ENCODE measurements at regions of chr21 and their contacts with region 1.

Region 1: DNA sequence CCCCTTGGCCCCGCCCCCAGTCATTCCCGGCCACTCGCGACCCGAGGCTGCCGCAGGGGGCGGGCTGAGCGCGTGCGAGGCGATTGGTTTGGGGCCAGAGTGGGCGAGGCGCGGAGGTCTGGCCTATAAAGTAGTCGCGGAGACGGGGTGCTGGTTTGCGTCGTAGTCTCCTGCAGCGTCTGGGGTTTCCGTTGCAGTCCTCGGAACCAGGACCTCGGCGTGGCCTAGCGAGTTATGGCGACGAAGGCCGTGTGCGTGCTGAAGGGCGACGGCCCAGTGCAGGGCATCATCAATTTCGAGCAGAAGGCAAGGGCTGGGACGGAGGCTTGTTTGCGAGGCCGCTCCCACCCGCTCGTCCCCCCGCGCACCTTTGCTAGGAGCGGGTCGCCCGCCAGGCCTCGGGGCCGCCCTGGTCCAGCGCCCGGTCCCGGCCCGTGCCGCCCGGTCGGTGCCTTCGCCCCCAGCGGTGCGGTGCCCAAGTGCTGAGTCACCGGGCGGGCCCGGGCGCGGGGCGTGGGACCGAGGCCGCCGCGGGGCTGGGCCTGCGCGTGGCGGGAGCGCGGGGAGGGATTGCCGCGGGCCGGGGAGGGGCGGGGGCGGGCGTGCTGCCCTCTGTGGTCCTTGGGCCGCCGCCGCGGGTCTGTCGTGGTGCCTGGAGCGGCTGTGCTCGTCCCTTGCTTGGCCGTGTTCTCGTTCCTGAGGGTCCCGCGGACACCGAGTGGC is at the start of gene SOD1:
- DNase-seq: peak; percentile 93
- ATAC-seq: peak; percentile 97
- H3K4me3 Mint-ChIP-seq: peak within 1 kb of the TSS; percentile 99
- H3K27ac Mint-ChIP-seq: peak within 1 kb of the TSS; percentile 96
- H3K4me1 Mint-ChIP-seq: peaks cover 65% of the 10 kb centered on the region
- H3K27me3 Mint-ChIP-seq: no peaks in the 10 kb centered on the region
- CTCF ChIP-seq: no peak
- total RNA-seq, gene SOD1: 107 and 131 TPM in 2 replicates

Region 2: DNA sequence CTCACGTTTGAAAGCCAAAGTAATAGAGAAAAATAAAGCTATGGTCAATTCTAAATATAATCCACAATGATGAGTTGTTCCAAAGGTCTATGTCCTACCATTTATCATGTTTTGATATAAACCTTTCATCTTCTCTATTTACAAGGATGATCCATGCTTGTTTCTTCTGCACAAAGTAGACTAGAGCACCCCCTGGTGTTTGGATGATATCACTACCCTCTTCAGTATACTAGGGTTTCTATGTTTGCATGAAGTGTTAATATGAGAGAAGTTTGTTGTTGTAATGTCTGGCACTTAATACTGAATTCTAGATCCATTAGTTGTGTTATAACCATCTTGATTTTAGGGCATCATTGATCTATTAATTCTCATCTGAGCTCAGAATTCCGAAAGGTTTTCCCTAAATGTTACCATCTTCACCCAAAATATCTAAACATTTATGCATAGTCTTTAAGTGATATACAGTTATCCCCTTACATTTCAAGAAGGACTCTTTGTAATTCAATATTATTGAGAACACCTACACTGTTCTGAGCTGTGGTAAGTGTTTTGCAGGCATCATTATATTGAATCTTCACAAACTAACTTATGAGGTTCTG is 1464.9 kb before region 1 on chr21:
- CTCF ChIA-PET with region 1: no interaction called
- POLR2A ChIA-PET with region 1: no interaction called
- intact Hi-C with region 1: no loop called
- DNase-seq: no peak
- ATAC-seq: no peak
- H3K4me3 Mint-ChIP-seq: no peak overlapping the region
- H3K27ac Mint-ChIP-seq: no peak overlapping the region
- H3K4me1 Mint-ChIP-seq: no peaks in the 10 kb centered on the region
- H3K27me3 Mint-ChIP-seq: no peaks in the 10 kb centered on the region
- CTCF ChIP-seq: no peak

Region 3: DNA sequence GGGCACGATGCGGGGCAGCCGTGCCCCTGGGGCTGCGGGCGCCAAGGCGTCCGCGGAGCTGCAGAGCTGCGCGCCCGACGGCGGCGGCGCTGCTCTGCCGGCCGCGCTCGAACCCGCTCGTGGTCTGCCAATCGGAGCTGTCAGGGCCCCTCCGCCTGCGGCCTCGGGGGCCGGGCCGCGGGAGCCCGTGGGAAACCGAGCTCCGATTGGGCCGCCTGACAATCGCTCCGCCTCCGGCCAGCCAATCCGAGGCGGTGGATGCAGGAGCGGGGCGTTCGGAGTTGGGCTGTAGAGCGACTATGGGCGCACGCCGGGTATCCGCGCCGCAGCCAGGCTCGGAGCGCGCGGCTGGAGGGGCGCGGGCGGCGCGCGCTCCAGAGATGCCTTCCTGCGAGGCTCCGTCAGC is 100.7 kb before region 1 on chr21:
- CTCF ChIA-PET with region 1: no interaction called
- POLR2A ChIA-PET with region 1: no interaction called
- intact Hi-C with region 1: loop called (anchors 2 kb)
- DNase-seq: peak; percentile 80
- ATAC-seq: peak; percentile 90
- H3K4me3 Mint-ChIP-seq: peak overlapping the region; percentile 93
- H3K27ac Mint-ChIP-seq: no peak overlapping the region
- H3K4me1 Mint-ChIP-seq: peaks cover 24% of the 10 kb centered on the region
- H3K27me3 Mint-ChIP-seq: peaks cover 30% of the 10 kb centered on the region
- CTCF ChIP-seq: no peak

Region 4: GRCh38 chr21:31688603-31689368 is 29.1 kb after region 1 on chr21:
- CTCF ChIA-PET with region 1: no interaction called
- POLR2A ChIA-PET with region 1: no interaction called
- intact Hi-C with region 1: no loop called
- DNase-seq: no peak
- ATAC-seq: no peak
- H3K4me3 Mint-ChIP-seq: no peak overlapping the region
- H3K27ac Mint-ChIP-seq: no peak overlapping the region
- H3K4me1 Mint-ChIP-seq: no peaks in the 10 kb centered on the region
- H3K27me3 Mint-ChIP-seq: no peaks in the 10 kb centered on the region
- CTCF ChIP-seq: no peak

Region 5: DNA sequence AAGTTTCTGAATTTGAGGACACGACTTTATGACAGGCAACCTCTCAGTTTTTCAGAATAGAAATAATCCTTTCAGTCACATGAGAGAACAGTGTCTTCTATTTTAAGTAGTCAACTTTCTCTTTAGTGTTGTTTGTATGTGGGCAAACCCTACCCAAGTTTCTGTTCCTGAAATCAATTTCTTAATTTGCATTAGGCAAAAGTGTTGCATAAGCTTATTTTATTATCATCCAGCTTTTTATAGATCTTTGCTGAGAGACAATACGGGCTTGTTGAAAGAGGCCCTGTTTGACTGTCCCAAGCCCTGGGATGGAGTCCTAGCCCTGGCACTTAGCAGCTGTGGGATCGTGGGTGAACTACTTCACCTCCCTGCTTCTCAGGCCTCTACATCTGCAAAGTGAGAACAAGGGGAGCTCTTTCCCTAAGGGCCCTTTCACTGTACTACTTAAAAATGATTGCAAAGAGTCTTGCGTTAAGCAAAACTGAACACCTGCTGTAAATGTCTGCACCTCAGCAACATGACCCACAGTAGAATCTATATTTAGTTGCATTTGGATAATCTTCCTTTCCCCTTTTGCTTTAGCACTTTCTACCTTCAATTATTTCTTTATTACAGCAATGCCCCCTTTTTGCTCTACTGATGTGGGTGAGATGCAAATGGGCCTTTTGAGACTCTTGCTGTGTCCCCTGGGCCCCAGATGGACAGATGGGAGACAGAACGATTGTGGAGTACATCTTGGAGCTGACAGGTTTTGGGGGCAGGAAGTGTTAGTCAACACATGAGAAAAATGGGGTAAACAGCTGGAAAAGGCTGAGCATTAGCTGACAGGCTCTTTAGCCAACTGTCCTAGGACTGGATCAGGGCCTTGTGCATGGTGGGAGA is 113.2 kb after region 1 on chr21:
- CTCF ChIA-PET with region 1: no interaction called
- POLR2A ChIA-PET with region 1: interaction called, 3 read pairs
- intact Hi-C with region 1: loop called (anchors 1 kb)
- DNase-seq: peak; percentile 46
- ATAC-seq: peak; percentile 86
- H3K4me3 Mint-ChIP-seq: peak overlapping the region; percentile 76
- H3K27ac Mint-ChIP-seq: peak overlapping the region; percentile 98
- H3K4me1 Mint-ChIP-seq: peaks cover 61% of the 10 kb centered on the region
- H3K27me3 Mint-ChIP-seq: no peaks in the 10 kb centered on the region
- CTCF ChIP-seq: no peak

Region 6: DNA sequence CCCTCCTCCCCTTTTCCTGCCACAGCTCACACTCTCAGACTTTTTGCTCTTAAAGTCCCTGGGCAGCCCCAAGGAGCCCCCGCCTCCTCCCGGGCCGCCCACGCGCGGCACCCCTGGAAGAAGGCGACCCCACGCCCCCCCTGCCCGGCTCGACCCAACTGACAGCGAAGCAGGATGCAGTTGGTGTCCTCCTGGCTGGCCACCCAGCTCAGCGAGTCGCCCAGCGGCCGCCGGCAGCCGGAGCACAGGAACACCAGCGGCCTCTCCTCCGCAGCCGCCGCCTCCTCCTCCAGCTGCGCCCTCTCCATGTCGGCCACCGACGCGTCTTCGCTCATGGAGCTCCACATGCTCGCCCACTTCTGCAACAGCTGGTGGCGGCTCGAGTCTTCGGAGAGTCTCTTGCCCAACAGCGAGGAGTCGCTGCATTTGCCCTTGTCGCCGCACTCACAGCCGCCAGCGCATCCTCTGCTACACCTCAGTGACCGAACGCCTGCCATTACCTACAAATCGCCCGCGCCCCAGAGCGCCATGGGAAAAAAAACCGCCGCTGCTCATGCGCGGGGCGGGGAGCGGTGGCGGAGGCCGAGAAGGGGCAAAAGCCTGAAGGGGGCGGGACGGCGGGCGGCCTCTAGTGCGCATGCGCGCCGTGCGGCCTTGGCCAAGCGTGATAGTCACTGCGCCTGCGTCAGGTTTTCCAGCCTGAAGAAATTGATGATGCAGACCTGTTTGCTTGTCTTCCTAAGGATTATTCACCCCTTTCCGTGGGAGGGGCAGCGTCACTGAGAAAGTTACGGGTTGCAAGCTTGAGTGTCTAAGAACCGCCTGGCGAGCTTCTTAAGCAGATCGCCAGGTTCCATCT is 619.0 kb after region 1 on chr21 and contains the start of gene MIS18A:
- CTCF ChIA-PET with region 1: no interaction called
- POLR2A ChIA-PET with region 1: no interaction called
- intact Hi-C with region 1: loop called (anchors 2 kb)
- DNase-seq: peak; percentile 96
- ATAC-seq: peak; percentile 96
- H3K4me3 Mint-ChIP-seq: peak within 1 kb of the TSS; percentile 98
- H3K27ac Mint-ChIP-seq: peak within 1 kb of the TSS; percentile 88
- H3K4me1 Mint-ChIP-seq: peaks cover 16% of the 10 kb centered on the region
- H3K27me3 Mint-ChIP-seq: no peaks in the 10 kb centered on the region
- CTCF ChIP-seq: no peak
- total RNA-seq, gene MIS18A: 6.8 and 7.7 TPM in 2 replicates

Region 7: GRCh38 chr21:32392880-32393676 is 733.4 kb after region 1 on chr21 and contains the start of gene URB1:
- CTCF ChIA-PET with region 1: no interaction called
- POLR2A ChIA-PET with region 1: no interaction called
- intact Hi-C with region 1: loop called (anchors 1 kb)
- DNase-seq: peak; percentile 97
- ATAC-seq: peak; percentile 97
- H3K4me3 Mint-ChIP-seq: peak within 1 kb of the TSS; percentile 87
- H3K27ac Mint-ChIP-seq: peak within 1 kb of the TSS; percentile 83
- H3K4me1 Mint-ChIP-seq: peaks cover 41% of the 10 kb centered on the region
- H3K27me3 Mint-ChIP-seq: peaks cover 6% of the 10 kb centered on the region
- CTCF ChIP-seq: no peak
- total RNA-seq, gene URB1: 18.1 and 22.2 TPM in 2 replicates